GM12878 (cell line): ENCODE measurements at regions of chr12 and their contacts with region 1.

Region 1: DNA sequence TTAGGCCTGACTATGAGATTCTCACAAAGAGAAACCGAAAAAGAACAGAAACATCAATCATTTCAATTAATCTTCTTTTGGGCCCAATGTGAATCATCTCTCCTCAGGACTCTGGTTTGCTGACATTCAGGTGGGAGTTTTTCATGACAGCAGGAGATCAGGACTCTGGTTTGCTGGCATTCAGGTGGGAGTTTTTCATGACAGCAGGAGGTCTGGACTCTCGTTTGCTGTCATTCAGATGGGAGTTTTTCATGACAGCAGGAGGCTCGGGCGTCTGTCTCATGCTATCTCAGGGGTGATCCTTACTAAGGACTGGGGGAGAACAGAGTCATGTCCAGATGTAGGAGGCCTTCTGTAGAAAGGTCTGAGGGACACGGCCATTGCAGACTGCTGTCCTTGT is 40.1 kb upstream of the PARP11 start:
- DNase-seq: no peak
- ATAC-seq: no peak
- H3K4me3 ChIP-seq: no peak overlapping the region
- H3K27ac ChIP-seq: no peak overlapping the region
- H3K4me1 ChIP-seq: no peaks in the 10 kb centered on the region
- H3K27me3 ChIP-seq: peaks cover 0 to 3% of the 10 kb centered on the region in 2 experiments; a peak in 1 of 4 replicates
- CTCF ChIP-seq: no peak
- EP300 ChIP-seq: no peak
- POLR2A ChIP-seq: no peak
- RAD21 ChIP-seq: no peak

Region 2: GRCh38 chr12:3081886-3082285 is 831.4 kb before region 1 on chr12:
- CTCF ChIA-PET with region 1: no interaction called
- POLR2A ChIA-PET with region 1: interaction called, 10 read pairs
- RAD21 ChIA-PET with region 1: no interaction called
- SMC1A ChIA-PET with region 1: no interaction called
- in situ Hi-C with region 1: no loop called
- intact Hi-C with region 1: no loop called
- DNase-seq: no peak
- ATAC-seq: no peak
- H3K4me3 ChIP-seq: no peak overlapping the region
- H3K27ac ChIP-seq: no peak overlapping the region
- H3K4me1 ChIP-seq: no peaks in the 10 kb centered on the region
- H3K27me3 ChIP-seq: peaks cover 0 to 6% of the 10 kb centered on the region in 2 experiments
- CTCF ChIP-seq: no peak
- EP300 ChIP-seq: no peak
- POLR2A ChIP-seq: no peak
- RAD21 ChIP-seq: no peak

Region 3: GRCh38 chr12:4068981-4069669 is 155.8 kb after region 1 on chr12:
- CTCF ChIA-PET with region 1: no interaction called
- POLR2A ChIA-PET with region 1: no interaction called
- RAD21 ChIA-PET with region 1: no interaction called
- SMC1A ChIA-PET with region 1: no interaction called
- in situ Hi-C with region 1: no loop called
- intact Hi-C with region 1: no loop called
- DNase-seq: no peak
- ATAC-seq: peak; percentile 29
- H3K4me3 ChIP-seq: no peak overlapping the region
- H3K27ac ChIP-seq: no peak overlapping the region
- H3K4me1 ChIP-seq: no peaks in the 10 kb centered on the region
- H3K27me3 ChIP-seq: no peaks in the 10 kb centered on the region
- CTCF ChIP-seq: no peak
- EP300 ChIP-seq: no peak
- POLR2A ChIP-seq: no peak
- RAD21 ChIP-seq: no peak